IMR-90 (cell line): ENCODE measurements at regions of chr1 and their contacts with region 1.

Region 1: GRCh38 chr1:24201941-24202440 is 14.9 kb upstream of the IFNLR1 start:
- DNase-seq: peak; percentile 86
- ATAC-seq: peak; percentile 98
- H3K4me3 ChIP-seq: no peak overlapping the region
- H3K27ac ChIP-seq: no peak overlapping the region
- H3K4me1 ChIP-seq: peaks cover 2% of the 10 kb centered on the region; the same call in 1 of the 2 replicates
- H3K27me3 ChIP-seq: peaks cover 15% of the 10 kb centered on the region
- CTCF ChIP-seq: peak; percentile 96
- POLR2A ChIP-seq: no peak
- RAD21 ChIP-seq: peak; percentile 95

Region 2: GRCh38 chr1:24150234-24151174 is 51.5 kb before region 1 on chr1:
- CTCF ChIA-PET with region 1: no interaction called
- POLR2A ChIA-PET with region 1: no interaction called
- dilution Hi-C with region 1: no loop called
- in situ Hi-C with region 1: no loop called
- intact Hi-C with region 1: loop called (anchors 5 kb)
- DNase-seq: peak; percentile 67
- ATAC-seq: peak; percentile 99
- H3K4me3 ChIP-seq: no peak overlapping the region
- H3K27ac ChIP-seq: no peak overlapping the region
- H3K4me1 ChIP-seq: peaks cover 5% of the 10 kb centered on the region
- H3K27me3 ChIP-seq: peaks cover 54% of the 10 kb centered on the region
- CTCF ChIP-seq: peak; percentile 68
- POLR2A ChIP-seq: no peak
- RAD21 ChIP-seq: peak; percentile 48

Region 3: GRCh38 chr1:24351918-24352627 is 150.1 kb after region 1 on chr1:
- CTCF ChIA-PET with region 1: no interaction called
- POLR2A ChIA-PET with region 1: no interaction called
- dilution Hi-C with region 1: no loop called
- in situ Hi-C with region 1: no loop called
- intact Hi-C with region 1: no loop called
- DNase-seq: peak; percentile 73
- ATAC-seq: peak; percentile 66
- H3K4me3 ChIP-seq: no peak overlapping the region
- H3K27ac ChIP-seq: no peak overlapping the region
- H3K4me1 ChIP-seq: peaks cover 8% of the 10 kb centered on the region
- H3K27me3 ChIP-seq: peaks cover 3% of the 10 kb centered on the region; the same call in 1 of the 2 replicates
- CTCF ChIP-seq: no peak
- POLR2A ChIP-seq: no peak
- RAD21 ChIP-seq: no peak

Region 4: DNA sequence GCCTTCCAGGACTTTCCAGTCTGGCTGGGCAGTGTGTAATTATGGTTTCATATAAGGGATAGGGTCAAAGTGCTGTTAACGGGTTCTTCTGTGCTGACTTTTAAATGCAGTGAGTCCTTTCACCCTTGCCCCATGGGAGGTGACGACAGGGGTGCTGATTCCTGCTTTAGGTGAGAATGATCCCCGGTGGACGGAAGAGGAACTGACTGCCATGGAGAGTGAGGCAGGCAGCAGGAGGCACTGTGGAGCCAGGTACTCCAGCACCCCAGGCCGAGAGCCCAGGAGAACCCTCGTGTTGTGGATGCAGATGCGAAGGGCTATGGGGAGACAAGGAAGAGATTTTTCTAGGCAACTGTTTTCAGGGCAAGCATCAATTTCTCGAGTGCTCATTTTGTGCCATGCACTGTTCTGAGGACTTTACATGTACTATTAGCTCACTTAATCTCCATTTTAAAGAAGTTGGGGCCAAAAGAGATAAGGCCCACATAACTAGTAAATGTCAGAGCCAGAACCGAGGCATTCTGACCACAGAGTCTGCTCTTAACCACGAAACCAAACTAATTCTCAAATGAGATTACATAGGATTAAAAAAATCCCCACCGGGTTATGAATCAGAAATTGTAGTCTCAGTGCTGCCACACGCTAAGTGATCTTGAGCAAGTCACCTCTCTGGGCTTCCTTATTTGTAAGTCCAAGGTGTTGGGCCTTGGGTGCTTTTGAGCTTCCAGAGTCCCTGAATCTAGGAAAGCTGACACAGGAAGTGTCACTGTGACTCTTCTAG is 183.4 kb after region 1 on chr1:
- CTCF ChIA-PET with region 1: interaction called, 170 read pairs
- POLR2A ChIA-PET with region 1: interaction called, 3 read pairs
- dilution Hi-C with region 1: no loop called
- in situ Hi-C with region 1: loop called (anchors 5 kb)
- intact Hi-C with region 1: no loop called
- DNase-seq: peak; percentile 49
- ATAC-seq: no peak
- H3K4me3 ChIP-seq: no peak overlapping the region
- H3K27ac ChIP-seq: no peak overlapping the region
- H3K4me1 ChIP-seq: peaks cover 12% of the 10 kb centered on the region
- H3K27me3 ChIP-seq: no peaks in the 10 kb centered on the region
- CTCF ChIP-seq: peak; percentile 59
- POLR2A ChIP-seq: no peak
- RAD21 ChIP-seq: peak; percentile 5; the same call in 1 of the 2 replicates

Region 5: DNA sequence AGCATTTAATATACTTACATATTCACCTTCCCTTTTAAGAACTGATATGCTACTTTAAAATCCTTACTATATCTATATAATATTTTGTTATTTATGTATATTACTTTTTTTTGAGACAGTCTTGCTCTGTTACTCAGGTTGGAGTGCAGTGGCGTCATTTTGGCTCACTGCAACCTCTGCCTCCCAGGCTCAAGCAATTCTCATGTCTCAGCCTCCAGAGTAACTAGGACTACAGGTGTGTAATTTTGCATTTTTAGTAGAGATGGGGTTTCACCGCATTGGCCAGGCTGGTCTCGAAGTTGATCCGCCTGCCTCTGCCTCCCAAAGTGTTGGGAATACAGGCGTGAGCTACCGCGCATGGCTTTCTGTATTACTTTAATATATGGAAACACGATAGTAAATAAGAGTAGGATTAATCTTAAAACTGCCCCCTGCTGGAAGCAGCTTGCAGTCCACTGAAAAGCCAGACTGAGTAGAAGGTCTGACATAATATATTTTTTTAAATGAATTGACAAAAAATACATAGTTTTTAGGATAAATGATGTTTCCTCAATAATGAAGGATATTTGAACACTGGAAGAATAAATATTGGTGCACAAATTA is 325.1 kb after region 1 on chr1:
- CTCF ChIA-PET with region 1: interaction called, 9 read pairs
- POLR2A ChIA-PET with region 1: no interaction called
- dilution Hi-C with region 1: no loop called
- in situ Hi-C with region 1: no loop called
- intact Hi-C with region 1: loop called (anchors 5 kb)
- DNase-seq: peak; percentile 20
- ATAC-seq: peak; percentile 44; the same call in 1 of the 2 replicates
- H3K4me3 ChIP-seq: no peak overlapping the region
- H3K27ac ChIP-seq: no peak overlapping the region
- H3K4me1 ChIP-seq: no peaks in the 10 kb centered on the region
- H3K27me3 ChIP-seq: no peaks in the 10 kb centered on the region
- CTCF ChIP-seq: peak; percentile 56
- POLR2A ChIP-seq: no peak
- RAD21 ChIP-seq: peak; percentile 37; the same call in 1 of the 2 replicates

Region 6: GRCh38 chr1:24635195-24635843 is 433.3 kb after region 1 on chr1:
- CTCF ChIA-PET with region 1: interaction called, 3 read pairs
- POLR2A ChIA-PET with region 1: interaction called, 3 read pairs
- dilution Hi-C with region 1: no loop called
- in situ Hi-C with region 1: no loop called
- intact Hi-C with region 1: loop called (anchors 1 kb)
- DNase-seq: peak; percentile 83
- ATAC-seq: peak; percentile 96
- H3K4me3 ChIP-seq: no peak overlapping the region
- H3K27ac ChIP-seq: no peak overlapping the region
- H3K4me1 ChIP-seq: no peaks in the 10 kb centered on the region
- H3K27me3 ChIP-seq: peaks cover 18% of the 10 kb centered on the region
- CTCF ChIP-seq: peak; percentile 81
- POLR2A ChIP-seq: no peak
- RAD21 ChIP-seq: peak; percentile 81